ENCODE measurements at regions of chr3 and their contacts with region 1.

Region 1: DNA sequence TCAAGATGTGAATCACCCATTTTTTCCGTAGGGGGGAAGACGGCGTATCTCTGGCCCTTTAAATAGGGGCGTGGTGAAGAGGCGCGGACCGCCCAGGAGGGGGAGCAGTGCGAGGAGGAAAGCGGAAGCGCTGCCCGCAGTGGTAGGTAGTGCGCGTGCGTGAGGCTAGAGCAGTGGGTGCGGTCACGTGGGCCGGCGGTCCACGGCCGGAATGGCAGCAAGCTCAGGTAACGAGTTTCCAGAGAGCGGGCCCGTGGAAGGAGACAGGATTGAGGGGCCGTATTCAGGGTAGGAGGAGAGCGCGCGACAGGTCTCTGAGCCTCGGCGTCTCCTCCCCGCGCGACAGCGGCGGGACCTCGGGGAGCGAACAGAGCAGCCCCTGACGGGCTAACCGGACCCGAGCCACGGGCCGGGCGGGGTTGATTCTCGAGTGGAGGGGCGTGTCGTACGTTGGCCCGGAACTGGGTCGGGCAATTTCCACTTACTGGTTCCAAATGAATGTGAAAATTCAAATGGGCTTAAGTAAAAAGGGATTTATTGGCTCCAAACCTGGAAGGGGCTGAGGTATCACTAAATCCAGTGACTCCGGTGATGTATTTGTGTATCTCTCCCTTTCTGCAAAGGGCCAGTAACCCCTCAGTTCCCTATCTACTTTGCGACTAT is at the start of gene VPS8:
- DNase-seq: peak; percentile 97
- H3K4me3 Mint-ChIP-seq: peak within 1 kb of the TSS; percentile 92
- H3K27ac Mint-ChIP-seq: peak within 1 kb of the TSS; percentile 85
- H3K4me1 Mint-ChIP-seq: peaks cover 48% of the 10 kb centered on the region
- H3K27me3 Mint-ChIP-seq: no peaks in the 10 kb centered on the region
- total RNA-seq, gene VPS8: 32.7 to 33.7 TPM

Region 2: DNA sequence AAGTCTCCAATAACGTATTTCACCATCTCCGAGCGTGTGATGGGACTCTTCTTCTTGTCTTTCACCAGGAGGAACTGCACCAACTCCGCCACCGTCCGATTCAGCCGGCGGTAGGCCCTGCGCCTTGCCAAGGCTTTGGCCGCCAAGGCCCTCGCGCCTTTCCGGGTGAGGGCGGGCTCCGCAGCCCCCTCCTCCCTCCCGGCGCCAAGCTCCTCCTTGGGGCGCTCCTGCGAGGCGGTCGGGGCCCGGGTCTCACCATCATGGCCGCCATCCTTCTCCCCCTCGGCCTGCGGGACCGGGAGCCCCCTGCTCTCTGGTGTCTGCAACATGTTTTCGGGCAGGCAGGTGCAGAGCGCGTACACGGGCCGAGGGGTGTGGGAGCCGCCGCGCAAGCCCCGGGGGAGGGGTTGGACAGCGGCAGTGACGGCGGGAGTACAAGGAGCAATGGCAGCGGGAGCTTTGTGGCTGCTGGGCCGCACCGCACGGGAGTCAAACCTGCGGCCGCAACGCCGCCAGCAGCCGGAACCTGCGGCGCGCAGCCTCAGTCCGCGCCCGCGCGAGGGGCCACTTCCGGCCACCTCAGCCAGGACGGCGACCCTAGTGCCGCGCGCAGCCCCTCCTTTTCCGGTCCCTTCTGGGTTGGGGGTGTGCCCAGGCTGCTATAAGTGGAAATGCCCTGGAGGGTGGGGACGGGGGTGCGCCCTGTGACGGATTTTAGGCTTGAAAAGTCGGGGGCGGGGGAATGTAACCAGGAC is 100.5 kb before region 1 on chr3 and contains the start of gene MAGEF1:
- CTCF ChIA-PET with region 1: no interaction called
- intact Hi-C with region 1: loop called (anchors 1 kb)
- DNase-seq: peak; percentile 81
- H3K4me3 Mint-ChIP-seq: peak within 1 kb of the TSS; percentile 95
- H3K27ac Mint-ChIP-seq: peak within 1 kb of the TSS; percentile 90
- H3K4me1 Mint-ChIP-seq: peaks cover 36% of the 10 kb centered on the region
- H3K27me3 Mint-ChIP-seq: no peaks in the 10 kb centered on the region
- total RNA-seq, gene MAGEF1: 17.4 to 18.1 TPM

Region 3: DNA sequence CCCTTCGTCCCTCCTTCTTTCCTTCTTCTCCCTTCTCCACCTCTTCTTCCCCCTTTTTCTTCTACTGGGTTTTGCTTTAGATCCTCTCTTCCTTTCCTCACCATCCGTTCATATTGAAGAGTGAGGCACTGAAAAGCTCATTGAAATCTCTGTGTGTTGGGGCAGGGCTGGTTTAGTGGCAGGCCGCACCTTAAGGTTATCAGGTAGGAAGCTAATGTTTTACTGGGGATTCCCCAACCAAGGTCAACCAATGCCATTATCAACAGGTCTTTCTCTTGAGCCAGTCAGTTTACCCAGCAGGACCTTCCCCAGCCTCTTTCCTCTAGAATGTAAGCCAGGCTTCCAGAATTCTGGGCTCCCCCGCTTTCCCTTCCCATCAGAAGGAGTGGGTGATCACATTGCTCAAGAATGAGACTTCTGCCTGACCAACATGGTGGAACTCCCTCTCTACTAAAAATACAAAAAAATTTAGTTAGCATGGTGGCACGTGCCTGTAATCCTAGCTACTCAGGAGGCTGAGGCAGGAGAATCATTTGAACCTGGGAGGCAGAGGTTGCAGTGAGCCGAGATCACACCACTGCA is 11.7 kb before region 1 on chr3:
- CTCF ChIA-PET with region 1: interaction called, 21 read pairs
- intact Hi-C with region 1: no loop called
- DNase-seq: no peak
- H3K4me3 Mint-ChIP-seq: no peak overlapping the region
- H3K27ac Mint-ChIP-seq: no peak overlapping the region
- H3K4me1 Mint-ChIP-seq: no peaks in the 10 kb centered on the region
- H3K27me3 Mint-ChIP-seq: peaks cover 11% of the 10 kb centered on the region

Region 4: DNA sequence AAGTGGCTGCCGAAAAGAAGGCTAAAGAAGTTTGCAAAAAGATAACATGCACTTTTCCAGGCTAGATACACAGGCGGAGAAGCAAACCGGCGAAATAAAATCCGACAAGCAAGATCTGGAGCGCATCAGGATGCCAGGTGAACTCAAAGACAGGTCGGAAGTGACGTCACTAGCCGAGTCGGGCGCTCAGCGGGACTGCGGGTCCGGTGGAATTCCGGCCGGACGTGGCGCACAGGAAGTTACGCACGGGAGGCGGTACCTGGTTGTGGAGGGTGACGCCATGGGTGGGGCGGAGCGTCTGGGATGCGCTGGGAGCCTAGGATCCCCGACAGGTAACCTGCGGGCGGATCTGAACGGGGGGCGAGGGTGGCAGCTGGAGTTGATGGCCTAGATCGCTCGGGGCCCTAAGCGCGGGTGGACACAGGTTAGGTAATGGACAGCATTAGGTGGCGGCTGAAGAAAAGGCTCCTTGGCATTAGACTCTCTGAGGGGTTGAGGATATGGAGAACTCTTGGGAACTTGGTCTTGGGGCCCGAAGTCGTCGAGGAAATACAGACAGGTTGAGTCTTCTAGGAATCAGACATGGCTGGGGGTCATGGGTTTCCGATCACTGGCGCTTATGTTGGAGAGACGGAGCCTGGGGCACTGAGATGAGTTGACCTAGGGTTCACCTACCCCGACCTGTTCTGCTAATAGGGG is 470.7 kb after region 1 on chr3:
- CTCF ChIA-PET with region 1: no interaction called
- intact Hi-C with region 1: loop called (anchors 2 kb)
- DNase-seq: peak; percentile 98
- H3K4me3 Mint-ChIP-seq: peak overlapping the region; percentile 99
- H3K27ac Mint-ChIP-seq: peak overlapping the region; percentile 77
- H3K4me1 Mint-ChIP-seq: peaks cover 23% of the 10 kb centered on the region
- H3K27me3 Mint-ChIP-seq: peaks cover 18% of the 10 kb centered on the region

Measured in activated naive CD4-positive, alpha-beta T cell treated with anti-CD3 and anti-CD28 coated beads for 36 hours (primary cell).